Thyroid gland (tissue), 4 donors: ENCODE measurements at regions of chr3 and their contacts with region 1.

Region 1: DNA sequence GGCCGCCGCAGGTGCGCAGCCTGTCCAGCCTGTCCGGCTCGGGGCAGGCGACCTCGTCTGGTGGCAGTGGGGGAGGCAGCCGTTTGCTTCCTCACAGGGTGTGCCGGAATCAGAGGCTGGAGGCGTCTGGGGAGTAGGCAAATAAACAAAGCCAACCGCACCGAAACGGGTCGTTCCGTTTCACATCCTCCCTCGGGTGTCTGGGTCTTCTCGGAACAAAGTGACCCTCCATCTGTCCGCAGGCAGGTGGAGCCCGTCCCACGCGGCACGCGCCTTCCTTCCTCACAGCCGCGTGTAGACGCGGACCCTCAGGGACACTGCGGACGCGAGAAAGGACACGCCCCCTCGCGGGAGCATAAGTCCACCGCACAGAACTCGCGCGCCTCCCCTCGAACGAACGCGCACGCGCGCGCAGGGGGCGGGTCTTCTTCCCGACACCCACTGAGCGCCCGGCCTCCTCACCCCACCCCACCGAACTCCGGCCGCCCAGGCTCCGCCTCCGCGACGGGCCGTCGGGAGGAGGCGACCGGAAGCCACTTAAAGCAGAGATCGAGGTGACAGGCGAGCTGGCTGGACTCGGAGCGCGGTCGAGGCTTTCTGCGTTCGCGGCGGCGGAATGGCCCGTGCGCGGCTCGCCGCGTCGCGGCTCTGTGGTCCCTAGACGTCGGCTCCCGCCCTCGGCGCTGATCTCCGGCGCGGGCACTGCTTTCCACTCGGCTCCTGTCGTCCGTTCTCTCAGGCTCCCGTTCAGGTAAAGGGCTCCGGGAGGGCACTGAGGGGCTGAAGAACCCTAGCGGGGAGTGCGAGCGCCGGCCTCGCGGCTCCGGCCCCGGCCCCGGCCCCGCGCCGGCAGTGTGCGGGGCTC is at the start of gene TIPARP:
- DNase-seq: peak; percentile 100
- H3K4me3 ChIP-seq: peak within 1 kb of the TSS; percentile 55 to 95 (median 84)
- H3K27ac ChIP-seq: peak within 1 kb of the TSS; percentile 92 to 97 (median 97)
- H3K4me1 ChIP-seq: peaks cover 14 to 25% of the 10 kb centered on the region in 2 donors
- H3K27me3 ChIP-seq: no peaks in the 10 kb centered on the region
- CTCF ChIP-seq: peak in 5 of 6 experiments; percentile 65 to 93 (median 81)
- POLR2A ChIP-seq: peak; percentile 94 to 100
- total RNA-seq, gene TIPARP: 23.3 to 65.0 (median 31.2) TPM

Region 2: GRCh38 chr3:156554842-156555687 is 119.2 kb before region 1 on chr3 and contains the start of gene SSR3:
- intact Hi-C with region 1: loop called (anchors 10 kb)
- DNase-seq: peak; percentile 100
- H3K4me3 ChIP-seq: peak within 1 kb of the TSS; percentile 66 to 95 (median 83)
- H3K27ac ChIP-seq: peak within 1 kb of the TSS; percentile 76 to 86 (median 85)
- H3K4me1 ChIP-seq: peaks cover 35 to 49% of the 10 kb centered on the region in 2 donors
- H3K27me3 ChIP-seq: no peaks in the 10 kb centered on the region
- CTCF ChIP-seq: peak in 4 of 6 experiments; percentile 33 to 78 (median 62)
- POLR2A ChIP-seq: peak; percentile 90 to 94
- total RNA-seq, gene SSR3: 134 to 223 (median 176) TPM

Region 3: DNA sequence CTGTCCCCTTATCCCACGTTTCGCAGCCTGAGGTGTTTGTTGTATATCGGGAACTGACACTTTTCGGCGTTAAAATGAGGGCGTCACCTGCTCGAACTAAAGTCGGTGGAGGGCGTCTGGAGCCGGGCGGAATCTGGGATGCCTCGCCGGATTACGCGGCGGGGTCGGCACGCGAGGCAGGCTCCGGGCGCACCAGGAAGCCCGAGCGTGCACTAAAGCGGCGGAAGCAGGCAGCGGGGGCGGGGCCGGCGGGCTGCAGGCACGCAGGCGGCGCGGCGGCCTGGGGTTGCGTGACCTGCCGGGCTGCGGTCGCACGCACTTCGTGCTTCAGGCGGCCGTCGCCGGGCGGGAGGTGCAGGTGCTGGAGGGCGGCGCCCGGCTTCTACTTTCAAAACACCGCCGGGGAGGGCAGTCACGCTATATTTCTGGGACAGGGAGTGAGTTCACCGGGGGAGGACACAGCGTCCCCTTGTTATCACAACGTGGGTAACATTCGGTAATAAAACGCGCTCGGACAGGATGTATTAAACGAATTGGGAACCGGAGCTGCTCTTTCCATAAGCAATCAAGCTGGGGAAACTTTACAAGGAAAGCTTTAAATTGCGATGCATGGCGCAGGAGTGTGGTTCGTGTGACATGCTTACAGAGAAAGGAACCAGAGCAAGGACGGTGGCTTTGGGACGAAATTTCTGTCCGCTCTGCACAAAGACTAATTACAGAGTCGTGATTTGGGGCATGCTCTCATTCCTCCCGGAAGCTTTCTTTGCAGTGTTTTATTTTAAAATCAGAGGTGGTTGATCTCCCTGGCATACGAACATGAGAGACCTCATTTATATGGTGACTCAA is 142.7 kb after region 1 on chr3:
- intact Hi-C with region 1: loop called (anchors 10 kb)
- DNase-seq: peak; percentile 84 to 85
- H3K4me3 ChIP-seq: peak overlapping the region; percentile 60 to 76 (median 63)
- H3K27ac ChIP-seq: peak overlapping the region; percentile 69 to 77 (median 77)
- H3K4me1 ChIP-seq: peaks cover 3 to 11% of the 10 kb centered on the region in 2 donors
- H3K27me3 ChIP-seq: no peaks in the 10 kb centered on the region
- CTCF ChIP-seq: no peak
- POLR2A ChIP-seq: peak in 1 of 2 donors; percentile 82